ENCODE measurements at regions of chr12 and their contacts with region 1.

Region 1: DNA sequence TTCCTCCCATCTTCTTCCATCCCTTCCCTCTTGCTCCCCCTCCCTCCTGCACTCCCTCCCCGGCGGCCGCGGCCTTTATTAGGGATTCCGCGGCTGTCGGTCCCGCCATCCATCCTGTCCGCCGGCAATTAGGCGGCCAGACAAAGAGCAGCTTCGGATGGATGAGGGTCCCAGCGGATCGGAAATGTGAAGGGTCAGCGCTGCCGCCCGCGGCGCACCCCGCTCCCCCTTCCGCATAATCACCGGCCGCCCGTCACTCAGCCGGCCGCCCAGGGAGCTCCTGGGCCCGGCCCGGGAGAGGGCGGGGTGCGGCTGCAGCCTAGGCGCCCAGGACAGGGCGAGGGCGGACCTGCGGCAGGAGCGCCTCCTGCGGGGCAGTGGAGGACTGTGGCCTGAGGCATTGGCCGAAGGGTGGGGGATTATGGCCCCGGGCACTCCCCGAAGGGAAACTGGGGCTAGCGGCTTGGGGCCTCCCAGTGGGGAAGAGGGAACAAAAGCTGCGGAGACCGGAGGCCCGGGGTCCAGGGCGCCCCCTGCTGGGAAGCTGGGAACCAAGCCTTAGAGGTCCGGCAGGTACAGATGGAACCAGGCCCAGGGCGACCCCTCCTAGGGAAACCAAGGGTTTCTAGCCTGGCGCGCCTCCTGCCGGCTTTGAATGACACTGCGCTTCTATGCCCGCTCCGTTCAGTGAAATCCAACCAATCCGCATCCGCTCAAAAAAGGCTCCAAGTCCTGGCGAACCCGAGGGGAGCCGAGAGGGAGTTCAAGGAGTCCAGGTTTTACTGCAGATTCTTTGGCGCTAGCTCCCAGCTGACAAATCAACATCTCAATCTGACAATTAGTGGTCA is 4.4 kb upstream of the DNAJC22 start:
- DNase-seq: peak; percentile 90
- H3K4me3 Mint-ChIP-seq: peak overlapping the region; percentile 53
- H3K27ac Mint-ChIP-seq: no peak overlapping the region
- H3K4me1 Mint-ChIP-seq: peaks cover 43% of the 10 kb centered on the region
- H3K27me3 Mint-ChIP-seq: peaks cover 64% of the 10 kb centered on the region

Region 2: GRCh38 chr12:48631057-48631456 is 711.2 kb before region 1 on chr12:
- CTCF ChIA-PET with region 1: no interaction called
- POLR2A ChIA-PET with region 1: no interaction called
- intact Hi-C with region 1: no loop called
- DNase-seq: no peak
- H3K4me3 Mint-ChIP-seq: no peak overlapping the region
- H3K27ac Mint-ChIP-seq: no peak overlapping the region
- H3K4me1 Mint-ChIP-seq: no peaks in the 10 kb centered on the region
- H3K27me3 Mint-ChIP-seq: peaks cover 10% of the 10 kb centered on the region

Region 3: DNA sequence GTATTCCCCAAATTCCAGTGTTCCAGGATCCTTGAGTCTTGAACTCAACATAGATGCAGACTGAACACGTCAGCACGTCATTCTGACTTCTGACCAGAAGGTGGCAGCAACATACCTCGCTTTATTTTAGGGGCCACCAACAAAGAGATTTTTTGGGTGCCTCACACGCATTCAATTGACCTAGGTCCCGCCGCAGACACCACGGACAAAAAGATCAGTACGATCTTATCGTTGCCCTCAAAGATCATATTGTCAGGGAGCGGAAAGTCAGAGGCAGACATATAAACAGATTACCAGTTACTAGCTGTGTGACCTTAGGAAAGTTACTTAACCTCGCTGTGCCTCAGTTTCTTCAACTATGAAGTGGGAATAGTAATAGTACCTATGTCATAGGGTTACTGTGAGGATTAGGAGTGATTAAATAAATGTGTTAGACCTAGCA is 53.9 kb before region 1 on chr12:
- CTCF ChIA-PET with region 1: interaction called, 234 read pairs
- POLR2A ChIA-PET with region 1: interaction called, 7 read pairs
- intact Hi-C with region 1: loop called (anchors 1 kb)
- DNase-seq: peak; percentile 80
- H3K4me3 Mint-ChIP-seq: no peak overlapping the region
- H3K27ac Mint-ChIP-seq: no peak overlapping the region
- H3K4me1 Mint-ChIP-seq: no peaks in the 10 kb centered on the region
- H3K27me3 Mint-ChIP-seq: peaks cover 23% of the 10 kb centered on the region

Region 4: DNA sequence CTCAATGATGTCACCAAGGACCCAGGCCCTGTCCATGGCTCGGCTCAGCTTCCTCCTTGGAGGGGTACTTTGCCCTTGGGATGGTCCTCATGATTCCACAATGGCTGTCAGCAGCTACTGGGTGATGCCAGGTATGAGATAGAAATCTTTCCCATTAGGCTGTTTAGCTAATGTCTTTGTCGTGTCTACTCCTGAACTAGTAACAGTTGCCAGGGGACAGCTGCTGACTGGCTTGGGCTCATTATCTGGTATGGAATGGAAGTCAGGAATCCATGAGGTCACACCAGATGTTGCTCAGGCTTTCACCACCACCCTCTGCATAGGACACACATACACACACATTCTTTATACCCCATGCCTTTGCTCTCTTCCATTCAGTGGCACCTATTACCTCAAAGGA is 38.1 kb before region 1 on chr12:
- CTCF ChIA-PET with region 1: interaction called, 234 read pairs
- POLR2A ChIA-PET with region 1: no interaction called
- intact Hi-C with region 1: no loop called
- DNase-seq: no peak
- H3K4me3 Mint-ChIP-seq: no peak overlapping the region
- H3K27ac Mint-ChIP-seq: no peak overlapping the region
- H3K4me1 Mint-ChIP-seq: peaks cover 6% of the 10 kb centered on the region
- H3K27me3 Mint-ChIP-seq: peaks cover 25% of the 10 kb centered on the region

Region 5: GRCh38 chr12:49331380-49332222 is 10.7 kb before region 1 on chr12:
- CTCF ChIA-PET with region 1: interaction called, 45 read pairs
- POLR2A ChIA-PET with region 1: interaction called, 3 read pairs
- intact Hi-C with region 1: no loop called
- DNase-seq: peak; percentile 32
- H3K4me3 Mint-ChIP-seq: no peak overlapping the region
- H3K27ac Mint-ChIP-seq: no peak overlapping the region
- H3K4me1 Mint-ChIP-seq: peaks cover 10% of the 10 kb centered on the region
- H3K27me3 Mint-ChIP-seq: peaks cover 32% of the 10 kb centered on the region

Region 6: DNA sequence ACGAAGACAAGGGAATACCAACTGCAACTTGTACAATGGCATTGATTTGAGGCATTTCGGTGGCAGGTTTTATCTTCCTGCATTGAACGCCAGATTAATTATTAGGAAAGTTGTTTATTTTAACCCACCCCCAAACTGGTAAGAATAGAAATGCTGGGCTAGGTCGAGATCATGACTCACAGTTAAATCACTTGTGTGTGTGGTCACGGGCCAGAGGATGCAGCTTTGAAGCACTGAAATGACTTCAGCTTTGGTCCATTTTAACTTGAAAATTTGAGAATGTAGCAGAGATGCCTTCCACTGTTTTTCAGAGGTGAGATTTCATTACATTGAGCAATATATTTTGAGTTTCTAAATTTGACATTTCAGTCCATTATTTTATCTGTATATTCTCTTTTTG is 173.0 kb after region 1 on chr12:
- CTCF ChIA-PET with region 1: interaction called, 28 read pairs
- POLR2A ChIA-PET with region 1: no interaction called
- intact Hi-C with region 1: no loop called
- DNase-seq: no peak
- H3K4me3 Mint-ChIP-seq: no peak overlapping the region
- H3K27ac Mint-ChIP-seq: no peak overlapping the region
- H3K4me1 Mint-ChIP-seq: peaks cover 6% of the 10 kb centered on the region
- H3K27me3 Mint-ChIP-seq: no peaks in the 10 kb centered on the region

Region 7: GRCh38 chr12:49893753-49894752 is 551.8 kb after region 1 on chr12:
- CTCF ChIA-PET with region 1: no interaction called
- POLR2A ChIA-PET with region 1: no interaction called
- intact Hi-C with region 1: no loop called
- DNase-seq: peak; percentile 13
- H3K4me3 Mint-ChIP-seq: no peak overlapping the region
- H3K27ac Mint-ChIP-seq: no peak overlapping the region
- H3K4me1 Mint-ChIP-seq: no peaks in the 10 kb centered on the region
- H3K27me3 Mint-ChIP-seq: no peaks in the 10 kb centered on the region